PC-9 (cell line): ENCODE measurements at regions of chr14 and their contacts with region 1.

Region 1: DNA sequence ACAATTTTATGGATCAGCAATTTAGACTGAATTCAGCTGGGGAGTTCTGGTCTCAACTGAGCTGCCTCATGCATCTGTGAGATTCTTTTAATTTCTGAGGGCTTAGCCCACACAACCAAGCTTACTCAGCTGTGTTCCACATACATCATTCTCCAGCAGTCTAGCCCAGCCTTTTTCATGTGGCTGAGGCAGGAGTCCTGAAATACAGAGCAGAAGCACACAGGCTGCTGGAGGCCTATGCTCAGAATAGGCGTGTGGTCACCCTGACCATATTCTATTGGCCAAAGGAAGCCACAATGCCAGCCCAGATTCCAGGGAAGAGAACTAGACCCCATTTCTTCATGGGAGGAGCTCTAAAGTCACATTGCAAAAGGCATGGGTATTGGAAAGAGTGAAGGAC is 72.3 kb upstream of the DHRS4 start:
- DNase-seq: no peak
- H3K4me3 ChIP-seq: no peak overlapping the region
- H3K27ac ChIP-seq: no peak overlapping the region
- H3K4me1 ChIP-seq: no peaks in the 10 kb centered on the region
- H3K27me3 ChIP-seq: no peaks in the 10 kb centered on the region
- CTCF ChIP-seq: no peak

Region 2: DNA sequence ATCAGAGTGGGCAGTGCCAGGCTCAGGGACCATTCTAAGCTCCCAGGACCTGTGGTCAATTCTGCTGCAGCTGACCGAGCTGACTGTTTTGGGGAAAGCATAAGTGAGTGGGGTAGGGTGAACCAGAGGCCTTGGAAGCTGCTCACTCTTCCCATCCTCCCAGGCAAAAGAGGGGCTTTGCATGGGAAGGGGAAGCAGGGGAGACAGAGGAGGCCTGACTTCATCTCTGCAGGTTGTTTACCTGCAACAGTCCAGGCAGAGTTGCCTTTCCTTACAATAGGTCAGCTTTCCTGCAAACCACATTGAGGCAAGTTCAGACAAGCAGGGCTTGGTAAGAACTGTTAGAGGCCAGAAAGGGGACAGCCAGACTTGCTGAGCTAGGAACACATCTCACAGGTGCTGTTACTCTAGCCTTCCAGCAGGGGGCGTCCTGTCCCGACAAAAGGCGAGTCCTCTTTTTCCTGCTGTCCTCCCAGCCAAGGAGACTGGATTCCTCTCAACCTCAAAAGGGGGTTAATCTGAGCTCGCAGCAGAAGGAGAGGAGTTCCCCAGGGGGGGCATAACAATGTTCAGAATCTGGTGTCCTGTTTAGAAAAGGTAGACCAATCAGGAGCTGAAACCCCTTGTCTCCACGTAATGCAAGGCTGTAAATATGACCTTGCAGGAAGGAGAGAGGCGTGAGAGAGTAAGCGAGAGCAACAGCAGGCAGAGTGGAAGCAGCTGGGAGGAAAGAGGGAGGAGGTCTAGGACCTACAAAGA is 249.4 kb before region 1 on chr14:
- CTCF ChIA-PET with region 1: no interaction called
- POLR2A ChIA-PET with region 1: no interaction called
- intact Hi-C with region 1: no loop called
- DNase-seq: peak; percentile 37 to 70
- H3K4me3 ChIP-seq: no peak overlapping the region
- H3K27ac ChIP-seq: no peak overlapping the region
- H3K4me1 ChIP-seq: peaks cover 8% of the 10 kb centered on the region
- H3K27me3 ChIP-seq: no peaks in the 10 kb centered on the region
- CTCF ChIP-seq: peak; percentile 89

Region 3: GRCh38 chr14:23829736-23830502 is 51.4 kb before region 1 on chr14:
- CTCF ChIA-PET with region 1: interaction called, 10 read pairs
- POLR2A ChIA-PET with region 1: no interaction called
- intact Hi-C with region 1: no loop called
- DNase-seq: peak; percentile 50 to 91
- H3K4me3 ChIP-seq: no peak overlapping the region
- H3K27ac ChIP-seq: peak overlapping the region; percentile 51
- H3K4me1 ChIP-seq: peaks cover 21% of the 10 kb centered on the region
- H3K27me3 ChIP-seq: no peaks in the 10 kb centered on the region
- CTCF ChIP-seq: no peak